ENCODE measurements at regions of chr18 and their contacts with region 1.

Region 1: GRCh38 chr18:48834413-48835031 is 116.2 kb downstream of the SMAD7 start:
- DNase-seq: peak; percentile 66
- H3K4me3 Mint-ChIP-seq: peak overlapping the region; percentile 85
- H3K27ac Mint-ChIP-seq: peak overlapping the region; percentile 98
- H3K4me1 Mint-ChIP-seq: peaks cover 62% of the 10 kb centered on the region
- H3K27me3 Mint-ChIP-seq: no peaks in the 10 kb centered on the region

Region 2: GRCh38 chr18:48777026-48777743 is 57.3 kb before region 1 on chr18:
- intact Hi-C with region 1: loop called (anchors 2 kb)
- DNase-seq: peak; percentile 43
- H3K4me3 Mint-ChIP-seq: no peak overlapping the region
- H3K27ac Mint-ChIP-seq: no peak overlapping the region
- H3K4me1 Mint-ChIP-seq: peaks cover 2% of the 10 kb centered on the region
- H3K27me3 Mint-ChIP-seq: no peaks in the 10 kb centered on the region

Region 3: DNA sequence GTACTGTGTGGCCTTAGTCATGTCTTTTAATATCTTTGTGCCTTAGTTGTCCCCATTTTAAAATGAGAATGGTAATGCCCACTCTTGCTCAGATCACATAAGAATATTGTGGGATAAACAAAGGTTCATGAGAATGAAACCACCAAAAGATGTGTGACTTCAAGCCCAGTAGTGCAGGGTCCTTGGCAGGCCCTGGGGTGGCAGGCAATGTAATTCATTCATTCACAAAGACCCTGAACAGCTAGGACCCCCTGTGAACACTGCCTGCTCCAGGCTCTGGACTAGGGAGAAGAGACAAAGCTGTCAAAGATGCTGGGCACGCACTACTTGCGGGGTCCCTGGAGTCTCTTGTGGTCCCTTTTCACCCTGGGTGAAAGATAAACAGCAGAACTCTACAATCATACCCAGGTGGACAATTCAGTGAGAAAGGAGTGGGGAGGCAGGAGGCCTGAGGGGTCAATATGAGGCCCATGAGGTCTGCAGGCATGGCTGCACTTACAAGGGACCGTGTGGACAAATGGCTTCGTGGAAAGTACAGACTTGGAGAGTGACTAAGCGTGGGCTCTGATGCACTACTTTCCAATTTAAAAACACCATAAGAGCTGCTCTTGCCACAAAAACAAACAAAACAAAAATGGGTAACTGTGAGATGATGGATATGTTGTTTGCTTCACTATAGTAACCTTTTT is 19.9 kb before region 1 on chr18:
- intact Hi-C with region 1: loop called (anchors 1 kb)
- DNase-seq: no peak
- H3K4me3 Mint-ChIP-seq: no peak overlapping the region
- H3K27ac Mint-ChIP-seq: peak overlapping the region; percentile 85
- H3K4me1 Mint-ChIP-seq: peaks cover 47% of the 10 kb centered on the region
- H3K27me3 Mint-ChIP-seq: no peaks in the 10 kb centered on the region